CD4-positive, alpha-beta T cell (primary cell): ENCODE measurements at regions of chr16 and their contacts with region 1.

Region 1: DNA sequence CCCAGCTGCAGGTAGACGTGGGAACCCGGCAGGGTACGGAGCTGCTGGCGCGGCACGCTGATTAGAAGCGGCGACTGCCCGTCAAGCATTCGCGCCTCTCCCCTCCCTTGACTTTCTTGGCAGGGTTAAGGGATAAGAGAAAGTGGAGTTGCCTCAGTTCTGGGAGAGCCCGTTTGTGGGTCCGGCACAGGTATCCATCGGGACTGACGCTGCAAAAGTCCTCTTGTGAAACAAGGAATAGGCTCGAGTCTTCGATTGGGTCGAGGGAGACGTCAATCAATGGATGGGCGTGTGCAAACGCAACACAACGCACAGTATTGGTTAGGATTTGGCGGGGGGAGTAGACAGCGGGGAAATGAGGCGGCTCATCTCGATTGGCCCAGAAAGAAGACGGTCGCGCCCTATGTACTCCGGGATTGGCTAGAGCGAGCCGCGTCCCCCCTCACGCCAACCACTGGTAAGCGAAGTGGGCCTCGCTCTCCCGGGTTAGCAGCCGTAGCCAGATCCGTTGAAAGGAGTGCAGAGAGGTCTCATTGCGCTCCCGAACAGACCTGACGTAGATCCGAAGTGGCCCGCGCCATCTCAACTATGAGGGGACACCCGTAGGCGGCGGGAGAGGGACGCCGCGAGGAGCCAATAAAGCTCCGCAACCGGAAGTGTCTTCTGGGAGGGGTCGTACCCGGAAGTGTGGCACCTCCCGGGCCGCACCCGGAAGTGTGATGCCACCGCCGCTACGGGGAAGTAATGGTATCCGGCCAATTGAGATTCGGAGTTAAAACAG is at the start of gene MON1B:
- DNase-seq: peak; percentile 88 to 99 (median 92)
- ATAC-seq: peak; percentile 92
- H3K4me3 ChIP-seq: peak within 1 kb of the TSS; percentile 98
- H3K4me3 Mint-ChIP-seq: peak within 1 kb of the TSS; percentile 92
- H3K27ac ChIP-seq: peak within 1 kb of the TSS; percentile 95 to 99
- H3K27ac Mint-ChIP-seq: peak within 1 kb of the TSS; percentile 97
- H3K4me1 ChIP-seq: peaks cover 44% of the 10 kb centered on the region
- H3K4me1 Mint-ChIP-seq: peaks cover 50% of the 10 kb centered on the region
- H3K27me3 ChIP-seq: no peaks in the 10 kb centered on the region
- H3K27me3 Mint-ChIP-seq: no peaks in the 10 kb centered on the region
- CTCF ChIP-seq: no peak
- total RNA-seq, gene MON1B: 52.3 to 52.6 TPM

Region 2: DNA sequence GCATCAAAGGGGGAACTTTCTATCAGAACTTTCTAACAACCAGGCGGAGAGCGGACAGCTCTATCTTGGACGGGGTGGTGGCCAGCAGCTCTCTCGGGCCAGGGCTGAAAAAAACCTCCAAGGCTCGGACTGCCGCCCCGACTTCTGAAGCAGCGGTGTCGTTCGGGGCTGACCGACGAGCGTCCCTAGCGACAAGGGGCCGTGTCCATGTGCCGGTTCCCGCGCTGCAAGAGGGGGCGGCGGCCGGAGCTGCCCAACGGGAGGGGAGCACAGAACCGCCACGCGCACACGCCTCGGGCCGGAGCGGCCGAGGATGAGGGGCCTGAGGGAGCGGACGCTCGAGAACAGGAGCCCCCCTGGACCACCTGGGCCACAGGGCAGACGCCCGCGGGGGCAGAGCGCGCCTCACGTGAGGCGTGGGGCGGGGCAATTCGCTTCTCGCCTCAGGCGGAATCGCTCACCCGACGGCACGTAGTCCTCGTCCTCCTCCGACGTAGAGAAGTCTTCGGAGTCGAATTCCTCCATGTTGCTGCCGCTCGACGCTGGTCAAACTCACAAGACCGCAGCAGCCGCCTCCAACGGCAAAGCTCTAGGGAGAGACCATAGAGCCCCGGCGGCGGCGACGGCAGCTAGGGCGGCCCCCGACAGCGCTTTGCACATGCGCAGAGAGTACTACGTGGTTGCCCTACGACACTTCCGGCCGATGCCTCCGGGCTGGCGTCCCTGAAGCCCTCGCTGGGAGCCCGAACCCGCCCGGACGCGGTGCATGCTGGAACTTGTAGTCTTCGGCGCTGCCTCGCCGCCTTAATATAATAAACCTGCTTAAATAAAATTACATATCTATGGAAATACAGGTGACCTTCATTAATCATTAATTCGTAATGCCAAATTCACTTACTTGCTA is 1757.6 kb before region 1 on chr16 and contains the start of gene CFDP1:
- CTCF ChIA-PET with region 1: no interaction called
- POLR2A ChIA-PET with region 1: interaction called, 9 read pairs
- intact Hi-C with region 1: loop called in 1 of 2 experiments (anchors 2 kb)
- DNase-seq: peak; percentile 92 to 98 (median 94)
- ATAC-seq: peak; percentile 79
- H3K4me3 ChIP-seq: peak within 1 kb of the TSS; percentile 83
- H3K4me3 Mint-ChIP-seq: peak within 1 kb of the TSS; percentile 94
- H3K27ac ChIP-seq: peak within 1 kb of the TSS; percentile 96 to 97
- H3K27ac Mint-ChIP-seq: peak within 1 kb of the TSS; percentile 96
- H3K4me1 ChIP-seq: peaks cover 33% of the 10 kb centered on the region
- H3K4me1 Mint-ChIP-seq: peaks cover 28% of the 10 kb centered on the region
- H3K27me3 ChIP-seq: no peaks in the 10 kb centered on the region
- H3K27me3 Mint-ChIP-seq: no peaks in the 10 kb centered on the region
- CTCF ChIP-seq: no peak
- total RNA-seq, gene CFDP1: 23.0 to 25.5 TPM

Region 3: GRCh38 chr16:75555707-75556430 is 1634.8 kb before region 1 on chr16 and contains the start of gene TMEM231:
- CTCF ChIA-PET with region 1: no interaction called
- POLR2A ChIA-PET with region 1: no interaction called
- intact Hi-C with region 1: loop called in 1 of 2 experiments (anchors 10 kb)
- DNase-seq: peak; percentile 95 to 99 (median 97)
- ATAC-seq: peak; percentile 97
- H3K4me3 ChIP-seq: peak within 1 kb of the TSS; percentile 74
- H3K4me3 Mint-ChIP-seq: peak within 1 kb of the TSS; percentile 88
- H3K27ac ChIP-seq: peak within 1 kb of the TSS; percentile 58 to 82
- H3K27ac Mint-ChIP-seq: peak within 1 kb of the TSS; percentile 65
- H3K4me1 ChIP-seq: peaks cover 18% of the 10 kb centered on the region
- H3K4me1 Mint-ChIP-seq: peaks cover 13% of the 10 kb centered on the region
- H3K27me3 ChIP-seq: peaks cover 0 to 3% of the 10 kb centered on the region in 2 experiments
- H3K27me3 Mint-ChIP-seq: peaks cover 8% of the 10 kb centered on the region
- CTCF ChIP-seq: no peak
- total RNA-seq, gene TMEM231: 2.5 TPM

Region 4: DNA sequence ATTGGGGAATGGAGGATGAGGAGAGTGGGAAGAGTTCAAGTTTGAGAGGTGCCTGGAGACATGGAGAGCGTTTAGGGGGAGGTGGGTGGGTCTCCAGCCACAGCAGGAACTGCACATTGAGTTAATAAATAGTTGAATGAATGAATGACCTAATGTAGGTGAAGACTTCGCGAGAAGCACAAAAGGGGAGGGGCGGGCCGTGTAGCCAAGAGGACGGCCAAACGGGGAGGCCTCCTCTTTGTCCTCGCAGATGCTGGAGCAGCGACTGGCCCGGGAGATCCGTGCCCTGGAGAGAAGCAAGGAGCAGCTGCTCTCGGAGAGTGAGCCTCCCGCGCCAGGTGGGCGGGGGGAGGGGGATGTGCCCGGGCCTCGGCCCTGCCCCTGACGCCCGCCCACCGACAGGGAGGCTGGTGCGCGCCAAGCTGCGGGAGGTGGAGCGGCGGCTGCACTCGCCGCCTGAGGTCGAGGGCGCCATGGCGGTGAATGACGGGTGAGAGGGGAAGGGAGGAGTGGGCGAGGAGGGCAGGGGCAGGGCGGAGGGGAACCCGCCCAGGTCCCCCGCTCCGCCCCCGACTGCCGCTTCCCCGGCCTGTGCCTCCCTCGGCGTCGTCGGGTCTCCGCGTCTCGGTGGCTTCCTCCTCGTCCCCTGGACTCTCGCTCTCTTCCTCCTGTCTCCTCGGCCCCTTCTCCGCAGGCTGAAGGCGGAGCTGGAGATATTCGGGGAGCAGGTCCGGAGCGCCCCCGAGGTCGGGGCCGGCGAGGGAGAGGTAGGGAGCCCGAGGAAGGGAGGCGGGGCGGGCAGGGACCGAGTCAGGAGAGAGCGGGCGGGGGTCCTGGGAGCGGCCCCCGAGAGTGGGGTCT is 21.4 kb after region 1 on chr16:
- CTCF ChIA-PET with region 1: interaction called, 5 read pairs
- POLR2A ChIA-PET with region 1: interaction called, 31 read pairs
- intact Hi-C with region 1: loop called (anchors 1 to 2 kb)
- DNase-seq: peak; percentile 48 to 90 (median 72)
- ATAC-seq: peak; percentile 86
- H3K4me3 ChIP-seq: peak overlapping the region; percentile 85
- H3K4me3 Mint-ChIP-seq: peak overlapping the region; percentile 96
- H3K27ac ChIP-seq: peak overlapping the region; percentile 58 to 74
- H3K27ac Mint-ChIP-seq: peak overlapping the region; percentile 72
- H3K4me1 ChIP-seq: peaks cover 17% of the 10 kb centered on the region
- H3K4me1 Mint-ChIP-seq: peaks cover 16% of the 10 kb centered on the region
- H3K27me3 ChIP-seq: no peaks in the 10 kb centered on the region
- H3K27me3 Mint-ChIP-seq: no peaks in the 10 kb centered on the region
- CTCF ChIP-seq: no peak

Region 5: GRCh38 chr16:77722309-77723107 is 531.8 kb after region 1 on chr16 and contains the start of gene NUDT7:
- CTCF ChIA-PET with region 1: no interaction called
- POLR2A ChIA-PET with region 1: interaction called, 6 read pairs
- intact Hi-C with region 1: loop called in 1 of 2 experiments (anchors 5 kb)
- DNase-seq: peak; percentile 85 to 100 (median 95)
- ATAC-seq: peak; percentile 93
- H3K4me3 ChIP-seq: peak within 1 kb of the TSS; percentile 95
- H3K4me3 Mint-ChIP-seq: peak within 1 kb of the TSS; percentile 94
- H3K27ac ChIP-seq: peak within 1 kb of the TSS; percentile 46 to 59
- H3K27ac Mint-ChIP-seq: peak within 1 kb of the TSS; percentile 87
- H3K4me1 ChIP-seq: peaks cover 19% of the 10 kb centered on the region
- H3K4me1 Mint-ChIP-seq: peaks cover 17% of the 10 kb centered on the region
- H3K27me3 ChIP-seq: no peaks in the 10 kb centered on the region
- H3K27me3 Mint-ChIP-seq: no peaks in the 10 kb centered on the region
- CTCF ChIP-seq: no peak
- total RNA-seq, gene NUDT7: 0.93 to 1.5 TPM

Region 6: DNA sequence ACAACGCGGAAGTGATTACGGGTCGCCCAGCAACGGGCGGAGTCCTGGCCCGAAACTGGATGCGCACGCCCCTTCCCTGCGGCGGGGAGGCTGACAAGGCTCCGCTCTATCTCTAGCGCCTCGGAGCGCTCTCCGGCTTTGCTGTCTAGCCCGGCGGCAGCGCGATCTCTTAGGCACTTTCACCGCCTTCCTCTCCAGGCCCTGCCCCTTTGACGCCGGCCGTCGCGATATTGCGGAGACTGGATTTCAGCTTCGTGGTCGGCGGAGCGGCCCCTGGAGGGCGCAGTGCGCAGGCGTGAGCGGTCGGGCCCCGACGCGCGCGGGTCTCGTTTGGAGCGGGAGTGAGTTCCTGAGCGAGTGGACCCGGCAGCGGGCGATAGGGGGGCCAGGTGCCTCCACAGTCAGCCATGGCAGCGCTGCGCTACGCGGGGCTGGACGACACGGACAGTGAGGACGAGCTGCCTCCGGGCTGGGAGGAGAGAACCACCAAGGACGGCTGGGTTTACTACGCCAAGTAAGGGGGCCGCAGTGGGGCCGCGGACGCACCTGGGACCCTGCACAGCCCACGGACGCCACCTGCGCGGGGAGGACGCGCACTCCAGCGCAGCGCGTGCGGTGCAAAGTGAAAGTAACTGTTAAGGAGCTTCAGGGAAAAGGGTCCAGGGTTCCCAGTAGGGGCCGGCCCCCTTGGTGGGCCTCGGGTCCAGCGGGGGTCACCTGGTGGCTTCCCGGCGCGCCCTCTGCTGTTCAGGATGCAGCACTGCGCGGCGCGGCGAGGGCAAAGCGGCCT is 908.9 kb after region 1 on chr16 and contains the start of gene WWOX:
- CTCF ChIA-PET with region 1: no interaction called
- POLR2A ChIA-PET with region 1: no interaction called
- intact Hi-C with region 1: loop called in 1 of 2 experiments (anchors 5 kb)
- DNase-seq: peak; percentile 91 to 99 (median 94)
- ATAC-seq: peak; percentile 96
- H3K4me3 ChIP-seq: peak within 1 kb of the TSS; percentile 91
- H3K4me3 Mint-ChIP-seq: peak within 1 kb of the TSS; percentile 94
- H3K27ac ChIP-seq: peak within 1 kb of the TSS; percentile 85 to 90
- H3K27ac Mint-ChIP-seq: peak within 1 kb of the TSS; percentile 83
- H3K4me1 ChIP-seq: peaks cover 29% of the 10 kb centered on the region
- H3K4me1 Mint-ChIP-seq: peaks cover 33% of the 10 kb centered on the region
- H3K27me3 ChIP-seq: no peaks in the 10 kb centered on the region
- H3K27me3 Mint-ChIP-seq: no peaks in the 10 kb centered on the region
- CTCF ChIP-seq: peak; percentile 98
- total RNA-seq, gene WWOX: 19.3 to 21.7 TPM